HepG2 (cell line): ENCODE measurements at regions of chr2 and their contacts with region 1.

Region 1: DNA sequence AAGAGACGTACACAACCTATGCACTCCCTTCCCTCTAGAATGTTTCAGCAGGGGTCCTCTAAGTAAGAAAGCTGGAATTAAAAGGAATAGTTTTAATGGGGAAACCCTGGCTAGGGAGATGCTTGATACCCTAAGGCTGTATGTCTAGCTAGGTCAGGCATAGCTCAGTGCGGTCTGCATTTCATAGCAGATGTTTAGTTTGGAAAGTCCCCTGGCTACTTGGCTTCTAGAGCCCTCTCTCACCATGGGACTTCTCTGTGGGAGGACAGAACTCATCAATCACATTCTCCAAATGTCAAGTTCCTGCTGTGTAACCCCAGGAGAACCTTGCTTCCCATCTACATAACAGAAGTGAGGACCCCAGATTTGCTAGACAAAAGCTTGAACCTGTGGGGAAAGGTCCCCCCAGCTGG is 24.1 kb upstream of the ANXA4 start:
- DNase-seq: no peak
- ATAC-seq: no peak
- H3K4me3 ChIP-seq: no peak overlapping the region
- H3K27ac ChIP-seq: no peak overlapping the region
- H3K4me1 ChIP-seq: peaks cover 38% of the 10 kb centered on the region
- H3K27me3 ChIP-seq: peaks cover 0 to 24% of the 10 kb centered on the region in 2 experiments; a peak in 2 of 5 replicates
- CTCF ChIP-seq: no peak
- EP300 ChIP-seq: no peak
- POLR2A ChIP-seq: no peak
- RAD21 ChIP-seq: no peak

Region 2: DNA sequence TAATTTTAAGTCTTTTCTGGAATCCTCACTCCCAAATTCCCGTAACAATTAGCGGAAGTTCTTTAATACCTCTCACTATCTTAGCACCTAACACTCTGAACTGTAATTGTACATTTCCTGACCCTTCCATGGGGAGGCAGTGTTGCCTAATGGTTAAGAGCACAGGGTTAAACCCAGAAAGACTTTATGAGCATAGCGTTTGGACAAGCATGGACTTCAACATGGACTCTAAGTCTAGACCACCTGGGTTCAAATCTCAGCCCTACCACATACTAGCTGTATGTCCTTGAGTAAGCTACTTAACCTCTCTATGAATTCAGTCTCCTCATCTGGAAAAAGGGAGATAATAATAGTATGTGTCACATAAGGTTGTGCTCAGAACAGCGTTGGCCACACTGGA is 691.8 kb before region 1 on chr2:
- CTCF ChIA-PET with region 1: no interaction called
- POLR2A ChIA-PET with region 1: no interaction called
- in situ Hi-C with region 1: no loop called
- intact Hi-C with region 1: loop called (anchors 10 kb)
- DNase-seq: peak; percentile 78
- ATAC-seq: peak; percentile 91
- H3K4me3 ChIP-seq: no peak overlapping the region
- H3K27ac ChIP-seq: no peak overlapping the region
- H3K4me1 ChIP-seq: peaks cover 24% of the 10 kb centered on the region
- H3K27me3 ChIP-seq: no peaks in the 10 kb centered on the region
- CTCF ChIP-seq: peak; percentile 92
- EP300 ChIP-seq: no peak
- POLR2A ChIP-seq: no peak
- RAD21 ChIP-seq: peak; percentile 93

Region 3: GRCh38 chr2:69375494-69376353 is 342.1 kb before region 1 on chr2:
- CTCF ChIA-PET with region 1: no interaction called
- POLR2A ChIA-PET with region 1: no interaction called
- in situ Hi-C with region 1: no loop called
- intact Hi-C with region 1: loop called (anchors 10 kb)
- DNase-seq: no peak
- ATAC-seq: peak; percentile 67
- H3K4me3 ChIP-seq: no peak overlapping the region
- H3K27ac ChIP-seq: no peak overlapping the region
- H3K4me1 ChIP-seq: peaks cover 8% of the 10 kb centered on the region
- H3K27me3 ChIP-seq: no peaks in the 10 kb centered on the region
- CTCF ChIP-seq: peak; percentile 64
- EP300 ChIP-seq: no peak
- POLR2A ChIP-seq: no peak
- RAD21 ChIP-seq: peak; percentile 33; the same call in 1 of the 2 replicates

Region 4: DNA sequence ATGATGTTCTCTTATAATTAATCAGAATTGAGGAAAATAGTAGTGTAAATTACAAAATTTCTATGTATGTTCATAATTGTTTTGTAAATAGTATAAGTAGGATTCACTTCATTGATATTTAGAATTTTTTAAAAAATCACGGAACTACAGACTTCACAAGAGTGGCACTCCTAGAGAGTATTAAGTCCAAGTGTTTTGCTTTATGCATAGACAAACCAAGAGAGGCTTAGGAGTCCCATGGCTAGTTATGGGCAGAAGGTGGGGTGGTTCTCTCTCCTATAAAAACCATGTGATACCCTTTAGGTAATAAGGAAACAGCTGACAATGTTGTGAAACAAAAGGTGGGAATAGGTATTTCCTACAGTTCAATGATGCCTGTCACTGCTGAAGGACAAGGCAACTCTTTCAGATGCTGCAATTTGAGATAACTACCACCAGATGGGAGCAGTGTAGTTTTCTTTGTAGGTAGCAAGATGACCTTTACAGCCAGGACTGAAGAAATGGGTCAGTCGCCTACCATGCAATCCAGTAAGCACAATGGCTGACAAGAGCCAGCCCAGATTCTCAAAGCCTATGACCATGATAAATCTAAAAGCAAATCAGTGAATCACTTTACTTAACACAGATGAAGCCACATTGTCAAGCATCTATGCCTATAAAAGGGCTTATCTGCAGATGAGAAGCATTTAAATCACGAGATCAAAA is 158.3 kb before region 1 on chr2:
- CTCF ChIA-PET with region 1: interaction called, 52 read pairs
- POLR2A ChIA-PET with region 1: no interaction called
- in situ Hi-C with region 1: loop called (anchors 5 kb)
- intact Hi-C with region 1: loop called (anchors 1 kb)
- DNase-seq: peak; percentile 86
- ATAC-seq: peak; percentile 97
- H3K4me3 ChIP-seq: no peak overlapping the region
- H3K27ac ChIP-seq: no peak overlapping the region
- H3K4me1 ChIP-seq: peaks cover 4% of the 10 kb centered on the region
- H3K27me3 ChIP-seq: no peaks in the 10 kb centered on the region
- CTCF ChIP-seq: peak; percentile 94
- EP300 ChIP-seq: no peak
- POLR2A ChIP-seq: no peak
- RAD21 ChIP-seq: peak; percentile 95

Region 5: GRCh38 chr2:70371753-70372152 is 653.9 kb after region 1 on chr2:
- CTCF ChIA-PET with region 1: no interaction called
- POLR2A ChIA-PET with region 1: no interaction called
- in situ Hi-C with region 1: no loop called
- intact Hi-C with region 1: no loop called
- DNase-seq: no peak
- ATAC-seq: no peak
- H3K4me3 ChIP-seq: no peak overlapping the region
- H3K27ac ChIP-seq: no peak overlapping the region
- H3K4me1 ChIP-seq: no peaks in the 10 kb centered on the region
- H3K27me3 ChIP-seq: peaks cover 0 to 7% of the 10 kb centered on the region in 2 experiments; a peak in 2 of 5 replicates
- CTCF ChIP-seq: no peak
- EP300 ChIP-seq: no peak
- POLR2A ChIP-seq: no peak
- RAD21 ChIP-seq: no peak